ENCODE measurements at regions of chr14 and their contacts with region 1.

Region 1: GRCh38 chr14:101707068-101707842 is 54.3 kb upstream of the PPP2R5C start:
- DNase-seq: peak; percentile 89
- ATAC-seq: peak; percentile 71
- H3K4me3 ChIP-seq: peak overlapping the region in 1 of 5 experiments; percentile 5
- H3K4me3 Mint-ChIP-seq: peak overlapping the region; percentile 65
- H3K27ac ChIP-seq: no peak overlapping the region
- H3K27ac Mint-ChIP-seq: peak overlapping the region; percentile 53
- H3K4me1 ChIP-seq: peaks cover 19 to 23% of the 10 kb centered on the region in 2 donors
- H3K4me1 Mint-ChIP-seq: peaks cover 22% of the 10 kb centered on the region
- H3K27me3 ChIP-seq: peaks cover 0 to 7% (median 1%) of the 10 kb centered on the region in 4 experiments
- H3K27me3 Mint-ChIP-seq: peaks cover 18% of the 10 kb centered on the region
- CTCF ChIP-seq: peak; percentile 90

Region 2: DNA sequence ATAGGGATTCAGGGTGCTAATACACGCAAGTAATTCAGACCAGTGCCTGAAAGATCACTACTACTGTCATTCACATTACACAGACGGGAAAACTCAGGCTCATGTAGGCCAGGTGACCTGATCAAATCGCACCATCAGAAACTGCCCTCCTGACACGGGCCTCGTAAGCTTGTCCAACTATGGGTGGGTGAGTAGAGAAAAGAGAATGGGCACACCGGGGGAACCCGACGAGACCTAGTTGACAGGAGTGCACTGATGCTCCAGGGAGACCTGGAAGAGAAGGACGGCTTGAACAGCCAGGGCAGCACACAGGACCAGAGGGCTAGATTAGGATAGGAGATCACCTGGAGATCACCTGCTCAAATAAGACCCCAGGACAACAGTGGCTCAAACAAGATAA is 312.9 kb before region 1 on chr14:
- CTCF ChIA-PET with region 1: no interaction called
- POLR2A ChIA-PET with region 1: no interaction called
- intact Hi-C with region 1: no loop called
- DNase-seq: no peak
- ATAC-seq: no peak
- H3K4me3 ChIP-seq: no peak overlapping the region
- H3K4me3 Mint-ChIP-seq: no peak overlapping the region
- H3K27ac ChIP-seq: no peak overlapping the region
- H3K27ac Mint-ChIP-seq: no peak overlapping the region
- H3K4me1 ChIP-seq: no peaks in the 10 kb centered on the region
- H3K4me1 Mint-ChIP-seq: no peaks in the 10 kb centered on the region
- H3K27me3 ChIP-seq: peaks cover 0 to 6% (median 0%) of the 10 kb centered on the region in 4 experiments
- H3K27me3 Mint-ChIP-seq: peaks cover 35% of the 10 kb centered on the region
- CTCF ChIP-seq: no peak

Region 3: DNA sequence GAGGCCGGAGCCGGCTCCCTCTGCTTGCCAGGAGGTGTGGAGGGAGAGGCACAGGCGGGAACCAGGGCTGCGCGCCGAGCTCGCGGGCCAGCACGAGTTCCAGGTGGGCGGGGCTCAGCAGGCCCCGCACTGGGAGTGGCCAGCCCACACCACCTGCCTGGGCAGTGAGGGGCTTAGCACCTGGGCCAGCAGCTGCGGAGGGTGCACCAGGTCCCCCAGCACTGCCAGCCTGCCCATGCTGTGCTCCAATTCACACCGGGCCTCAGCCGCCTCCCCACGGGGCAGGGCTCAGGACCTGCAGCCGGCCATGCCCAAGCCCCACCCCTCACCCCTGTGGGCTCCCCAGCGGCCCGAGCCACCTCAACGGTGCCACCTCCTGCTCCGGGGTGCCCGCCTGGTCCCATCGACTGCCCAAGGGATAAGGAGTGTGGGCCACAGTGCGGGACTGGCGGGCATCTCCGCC is 18.2 kb before region 1 on chr14:
- CTCF ChIA-PET with region 1: no interaction called
- POLR2A ChIA-PET with region 1: no interaction called
- intact Hi-C with region 1: no loop called
- DNase-seq: no peak
- ATAC-seq: no peak
- H3K4me3 ChIP-seq: no peak overlapping the region
- H3K4me3 Mint-ChIP-seq: no peak overlapping the region
- H3K27ac ChIP-seq: no peak overlapping the region
- H3K27ac Mint-ChIP-seq: no peak overlapping the region
- H3K4me1 ChIP-seq: no peaks in the 10 kb centered on the region
- H3K4me1 Mint-ChIP-seq: no peaks in the 10 kb centered on the region
- H3K27me3 ChIP-seq: peaks cover 0 to 4% (median 1%) of the 10 kb centered on the region in 4 experiments
- H3K27me3 Mint-ChIP-seq: peaks cover 37% of the 10 kb centered on the region
- CTCF ChIP-seq: no peak

Region 4: GRCh38 chr14:101721951-101722661 is 14.9 kb after region 1 on chr14:
- CTCF ChIA-PET with region 1: interaction called, 15 read pairs
- POLR2A ChIA-PET with region 1: no interaction called
- intact Hi-C with region 1: no loop called
- DNase-seq: peak; percentile 49
- ATAC-seq: peak; percentile 63
- H3K4me3 ChIP-seq: no peak overlapping the region
- H3K4me3 Mint-ChIP-seq: peak overlapping the region; percentile 51
- H3K27ac ChIP-seq: no peak overlapping the region
- H3K27ac Mint-ChIP-seq: peak overlapping the region; percentile 62
- H3K4me1 ChIP-seq: peaks cover 14 to 15% of the 10 kb centered on the region in 2 donors
- H3K4me1 Mint-ChIP-seq: peaks cover 13% of the 10 kb centered on the region
- H3K27me3 ChIP-seq: peaks cover 0 to 40% (median 9%) of the 10 kb centered on the region in 4 experiments
- H3K27me3 Mint-ChIP-seq: peaks cover 19% of the 10 kb centered on the region
- CTCF ChIP-seq: no peak

Region 5: GRCh38 chr14:101767618-101768362 is 60.5 kb after region 1 on chr14:
- CTCF ChIA-PET with region 1: interaction called, 30 read pairs
- POLR2A ChIA-PET with region 1: interaction called, 5 read pairs
- intact Hi-C with region 1: loop called (anchors 2 kb)
- DNase-seq: no peak
- ATAC-seq: no peak
- H3K4me3 ChIP-seq: no peak overlapping the region
- H3K4me3 Mint-ChIP-seq: no peak overlapping the region
- H3K27ac ChIP-seq: no peak overlapping the region
- H3K27ac Mint-ChIP-seq: no peak overlapping the region
- H3K4me1 ChIP-seq: peaks cover under 1 to 8% of the 10 kb centered on the region in 2 donors
- H3K4me1 Mint-ChIP-seq: peaks cover 12% of the 10 kb centered on the region
- H3K27me3 ChIP-seq: no peaks in the 10 kb centered on the region
- H3K27me3 Mint-ChIP-seq: no peaks in the 10 kb centered on the region
- CTCF ChIP-seq: no peak

Region 6: DNA sequence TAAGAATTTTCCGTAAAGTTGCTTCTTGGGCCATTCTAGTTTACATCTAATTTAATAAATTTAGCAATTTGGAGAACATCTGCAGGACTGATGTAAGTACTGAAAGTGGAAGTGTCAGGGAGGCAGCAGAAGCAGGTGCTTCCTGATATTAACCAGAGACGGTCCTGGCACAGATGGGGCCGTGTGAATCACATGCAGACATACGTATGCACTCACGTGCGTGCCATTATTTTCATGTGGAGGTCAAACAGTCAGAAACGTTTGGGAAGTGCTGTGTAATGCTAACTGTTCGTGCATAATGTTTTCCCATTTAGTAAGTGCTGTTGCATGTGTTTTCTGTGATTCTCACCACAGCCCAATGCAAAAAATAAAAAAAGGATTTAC is 169.3 kb after region 1 on chr14:
- CTCF ChIA-PET with region 1: no interaction called
- POLR2A ChIA-PET with region 1: no interaction called
- intact Hi-C with region 1: loop called (anchors 1 kb)
- DNase-seq: peak; percentile 96
- ATAC-seq: peak; percentile 89
- H3K4me3 ChIP-seq: peak overlapping the region in 4 of 5 experiments; percentile 8 to 57 (median 29)
- H3K4me3 Mint-ChIP-seq: peak overlapping the region; percentile 71
- H3K27ac ChIP-seq: peak overlapping the region; percentile 94 to 96
- H3K27ac Mint-ChIP-seq: peak overlapping the region; percentile 72
- H3K4me1 ChIP-seq: peaks cover 52 to 58% of the 10 kb centered on the region in 2 donors
- H3K4me1 Mint-ChIP-seq: peaks cover 79% of the 10 kb centered on the region
- H3K27me3 ChIP-seq: no peaks in the 10 kb centered on the region
- H3K27me3 Mint-ChIP-seq: no peaks in the 10 kb centered on the region
- CTCF ChIP-seq: no peak

Region 7: DNA sequence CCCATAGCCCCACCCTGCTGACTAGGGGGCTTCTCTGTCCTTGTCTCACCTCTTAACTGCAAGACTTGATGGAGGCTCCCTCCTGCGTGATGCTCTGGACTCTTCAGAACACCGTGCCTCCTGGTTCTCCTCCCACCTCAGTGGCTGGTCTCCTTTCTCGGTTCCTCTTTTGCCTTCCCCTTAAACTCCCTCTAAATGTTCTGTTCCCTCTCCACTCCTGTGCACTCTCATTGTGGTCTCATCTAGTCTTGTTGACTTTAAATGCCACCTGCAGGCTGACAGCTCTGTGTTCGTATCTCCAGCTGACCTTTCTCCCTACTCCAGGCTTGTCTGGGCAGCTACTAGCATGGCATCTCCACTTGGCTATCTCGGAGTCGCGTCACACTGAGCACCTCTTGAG is 285.5 kb after region 1 on chr14:
- CTCF ChIA-PET with region 1: interaction called, 36 read pairs
- POLR2A ChIA-PET with region 1: no interaction called
- intact Hi-C with region 1: loop called (anchors 1 kb)
- DNase-seq: peak; percentile 72
- ATAC-seq: peak; percentile 92
- H3K4me3 ChIP-seq: no peak overlapping the region
- H3K4me3 Mint-ChIP-seq: no peak overlapping the region
- H3K27ac ChIP-seq: peak overlapping the region in 1 of 2 donors; percentile 34
- H3K27ac Mint-ChIP-seq: peak overlapping the region; percentile 66
- H3K4me1 ChIP-seq: peaks cover 11% of the 10 kb centered on the region in 2 donors
- H3K4me1 Mint-ChIP-seq: peaks cover 17% of the 10 kb centered on the region
- H3K27me3 ChIP-seq: no peaks in the 10 kb centered on the region
- H3K27me3 Mint-ChIP-seq: no peaks in the 10 kb centered on the region
- CTCF ChIP-seq: peak; percentile 21

Region 8: DNA sequence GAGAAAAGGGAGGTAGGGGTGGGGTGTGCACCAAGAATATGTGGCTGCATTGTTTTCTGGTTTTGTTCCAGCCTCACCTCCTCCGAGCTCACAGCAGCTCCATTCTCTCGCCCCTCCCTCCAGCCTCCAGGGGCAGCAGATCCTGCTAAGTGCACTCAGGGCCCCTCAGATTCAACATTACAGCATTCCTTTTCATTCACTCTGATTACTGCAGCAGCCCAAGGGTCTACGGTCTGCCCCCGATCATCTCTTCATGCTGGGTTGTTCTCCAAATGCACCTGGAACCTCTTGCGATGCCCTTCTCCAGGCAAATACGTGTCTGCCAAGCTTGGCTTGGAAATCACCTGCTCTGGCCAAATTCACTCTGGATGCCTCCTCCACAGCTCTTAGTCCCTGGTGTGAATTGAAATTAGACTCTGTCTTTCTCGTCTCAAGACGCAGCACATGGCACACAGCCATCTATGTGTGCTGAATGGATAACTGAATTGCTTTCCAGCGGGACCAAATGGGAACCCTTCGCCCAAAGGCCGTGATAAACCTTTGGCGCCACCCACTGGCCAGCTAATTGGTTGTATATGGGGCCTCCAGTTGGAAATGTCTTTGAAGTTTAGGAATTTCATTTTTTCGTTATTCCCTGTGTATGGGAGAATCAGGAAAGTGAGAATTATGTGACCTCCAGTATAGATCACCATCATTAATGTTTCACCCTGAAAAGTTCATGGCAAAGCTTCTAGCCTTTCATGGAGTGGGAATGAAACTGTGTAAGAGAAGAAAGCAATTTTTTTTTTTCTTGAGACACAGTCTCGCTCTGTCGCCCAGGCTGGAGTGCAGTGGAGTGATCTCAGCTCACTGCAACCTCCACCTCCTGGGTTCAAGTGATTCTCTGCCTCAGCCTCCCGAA is 389.2 kb after region 1 on chr14:
- CTCF ChIA-PET with region 1: interaction called, 33 read pairs
- POLR2A ChIA-PET with region 1: no interaction called
- intact Hi-C with region 1: loop called (anchors 1 kb)
- DNase-seq: peak; percentile 69
- ATAC-seq: peak; percentile 73
- H3K4me3 ChIP-seq: no peak overlapping the region
- H3K4me3 Mint-ChIP-seq: no peak overlapping the region
- H3K27ac ChIP-seq: no peak overlapping the region
- H3K27ac Mint-ChIP-seq: no peak overlapping the region
- H3K4me1 ChIP-seq: peaks cover 0 to 3% of the 10 kb centered on the region in 2 donors
- H3K4me1 Mint-ChIP-seq: peaks cover 4% of the 10 kb centered on the region
- H3K27me3 ChIP-seq: no peaks in the 10 kb centered on the region
- H3K27me3 Mint-ChIP-seq: no peaks in the 10 kb centered on the region
- CTCF ChIP-seq: peak; percentile 78